ENCODE measurements at regions of chr11 and their contacts with region 1.

Region 1: GRCh38 chr11:1837171-1838076 is 1.4 kb upstream of the TNNI2 start:
- DNase-seq: peak; percentile 56
- H3K4me3 ChIP-seq: no peak overlapping the region
- H3K27ac ChIP-seq: no peak overlapping the region
- H3K4me1 ChIP-seq: no peaks in the 10 kb centered on the region
- H3K27me3 ChIP-seq: no peaks in the 10 kb centered on the region
- CTCF ChIP-seq: peak; percentile 78 to 82 (median 81)
- POLR2A ChIP-seq: no peak

Region 2: DNA sequence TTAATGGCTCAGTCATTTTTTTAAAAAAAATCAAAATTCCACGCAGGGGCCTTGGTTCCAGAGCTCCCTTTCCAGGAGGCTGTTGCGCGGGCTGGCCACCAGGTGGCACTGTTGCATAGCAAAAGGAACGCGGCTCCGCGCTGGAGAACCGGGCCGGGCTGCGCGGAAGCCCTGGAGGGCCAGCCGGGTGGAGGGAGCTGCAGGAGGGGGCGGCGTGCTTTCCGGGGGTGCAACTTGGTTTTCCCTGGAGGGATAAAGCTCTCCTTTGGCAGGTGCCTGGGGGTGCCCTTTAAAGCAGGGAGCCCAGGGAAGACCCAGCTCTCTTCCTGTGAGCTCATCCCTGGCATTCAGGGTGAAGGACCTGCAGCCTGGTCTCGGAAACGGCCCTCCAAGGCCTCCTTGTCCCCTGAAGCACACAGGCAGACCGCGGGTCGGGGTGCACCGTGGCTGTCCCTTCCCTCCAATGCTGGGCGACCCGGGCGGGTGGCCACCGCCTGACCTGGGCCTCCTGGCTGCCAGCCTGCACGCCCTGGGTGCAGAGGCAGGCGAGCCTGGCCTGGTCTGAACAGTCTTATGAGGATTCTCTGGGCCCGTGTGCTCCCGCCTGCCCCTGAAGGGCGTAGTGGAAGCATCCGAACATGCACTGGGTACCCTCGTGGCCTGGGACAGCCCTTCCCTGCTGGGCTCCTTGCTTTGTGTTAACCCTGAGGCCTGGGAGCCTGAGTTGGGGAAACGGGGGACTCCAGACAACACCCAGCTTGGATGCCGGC is 184.5 kb before region 1 on chr11:
- intact Hi-C with region 1: loop called (anchors 10 kb)
- DNase-seq: peak; percentile 88
- H3K4me3 ChIP-seq: no peak overlapping the region
- H3K27ac ChIP-seq: no peak overlapping the region
- H3K4me1 ChIP-seq: no peaks in the 10 kb centered on the region
- H3K27me3 ChIP-seq: no peaks in the 10 kb centered on the region
- CTCF ChIP-seq: peak; percentile 97 to 99 (median 98)
- POLR2A ChIP-seq: no peak

Region 3: DNA sequence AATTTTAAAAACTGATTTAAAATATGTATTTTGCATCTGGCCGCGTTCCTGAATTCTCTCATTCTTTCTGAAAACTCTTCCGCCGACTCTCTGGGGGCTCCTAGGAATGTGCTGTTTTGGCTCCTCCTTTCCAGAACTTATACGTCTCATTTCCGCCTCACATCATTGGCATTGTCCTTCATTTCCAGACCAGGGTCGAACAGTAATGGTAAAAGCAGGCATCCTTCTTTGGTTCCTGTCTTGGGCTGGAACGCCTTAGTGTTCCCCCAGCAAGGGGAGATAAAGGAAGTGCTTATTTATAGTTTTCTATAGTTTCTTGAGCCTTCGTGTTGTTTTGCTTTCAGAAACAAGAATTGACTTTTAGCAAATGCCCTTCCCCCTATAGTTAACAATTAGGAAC is 71.2 kb after region 1 on chr11:
- intact Hi-C with region 1: no loop called
- DNase-seq: no peak
- H3K4me3 ChIP-seq: no peak overlapping the region
- H3K27ac ChIP-seq: peak overlapping the region in 1 of 2 donors; percentile 70
- H3K4me1 ChIP-seq: peaks cover 15% of the 10 kb centered on the region
- H3K27me3 ChIP-seq: no peaks in the 10 kb centered on the region
- CTCF ChIP-seq: no peak
- POLR2A ChIP-seq: no peak

Region 4: DNA sequence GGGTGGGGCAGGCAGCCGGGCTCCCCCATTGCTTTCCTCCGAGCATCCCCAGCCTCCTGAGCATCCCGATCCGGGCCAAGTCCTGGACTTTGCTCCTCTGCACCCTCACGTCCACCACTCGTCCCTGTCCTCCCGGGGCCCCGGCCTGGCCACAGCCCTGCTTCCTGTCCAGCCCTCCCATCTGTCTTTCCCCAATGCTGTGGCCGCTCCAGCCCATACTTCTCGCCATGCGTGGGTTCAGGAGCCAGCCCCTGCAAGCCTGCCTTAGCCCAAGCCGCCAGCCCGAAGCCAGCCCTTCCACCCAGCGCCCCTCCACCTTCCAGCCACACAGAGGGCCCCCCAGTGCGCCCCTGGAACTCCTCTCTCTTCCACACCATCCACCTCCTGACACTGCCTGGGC is 133.5 kb after region 1 on chr11:
- intact Hi-C with region 1: no loop called
- DNase-seq: no peak
- H3K4me3 ChIP-seq: no peak overlapping the region
- H3K27ac ChIP-seq: no peak overlapping the region
- H3K4me1 ChIP-seq: no peaks in the 10 kb centered on the region
- H3K27me3 ChIP-seq: no peaks in the 10 kb centered on the region
- CTCF ChIP-seq: no peak
- POLR2A ChIP-seq: no peak

Measured in testis (tissue), 5 donors.